Activated B cell treated with CpG ODN at 0.5 μM for 24 hours (primary cell): ENCODE measurements at regions of chr6 and their contacts with region 1.

Region 1: DNA sequence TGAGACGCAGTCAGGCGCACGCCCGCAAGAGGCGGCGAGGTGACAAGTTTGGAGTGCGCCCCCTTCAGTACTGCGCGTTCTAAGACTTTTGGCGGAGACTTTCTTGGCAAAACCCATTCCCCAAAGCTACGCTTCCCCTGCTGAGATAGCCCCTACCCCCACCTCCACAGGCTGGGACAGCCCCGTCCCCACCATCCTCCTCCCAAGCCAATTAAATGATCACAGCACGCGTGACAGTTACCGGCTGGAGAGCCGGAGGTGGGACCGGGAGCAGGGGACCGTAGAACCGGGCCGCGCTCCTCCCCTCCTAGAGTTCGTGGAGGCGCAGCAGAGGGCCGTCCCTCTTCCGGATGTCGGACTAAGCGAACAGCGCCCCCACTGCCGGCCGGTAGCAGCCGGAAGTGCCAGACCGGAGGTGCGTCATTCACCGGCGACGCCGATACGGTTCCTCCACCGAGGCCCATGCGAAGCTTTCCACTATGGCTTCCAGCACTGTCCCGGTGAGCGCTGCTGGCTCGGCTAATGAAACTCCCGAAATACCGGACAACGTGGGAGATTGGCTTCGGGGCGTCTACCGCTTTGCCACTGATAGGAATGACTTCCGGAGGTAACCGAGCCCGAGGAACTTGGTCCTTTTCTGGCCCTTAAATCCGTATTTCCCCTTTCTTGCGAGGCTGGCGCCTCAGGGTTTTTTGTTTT is at the start of gene TOMM6:
- DNase-seq: peak; percentile 91
- ATAC-seq: peak; percentile 83
- H3K4me3 Mint-ChIP-seq: peak within 1 kb of the TSS; percentile 97
- H3K27ac Mint-ChIP-seq: peak within 1 kb of the TSS; percentile 97
- H3K4me1 Mint-ChIP-seq: peaks cover 28% of the 10 kb centered on the region
- H3K27me3 Mint-ChIP-seq: no peaks in the 10 kb centered on the region
- CTCF ChIP-seq: peak; percentile 66
- total RNA-seq, gene TOMM6: 219 and 252 TPM in 2 replicates

Region 2: GRCh38 chr6:41200296-41200900 is 587.0 kb before region 1 on chr6:
- CTCF ChIA-PET with region 1: no interaction called
- POLR2A ChIA-PET with region 1: interaction called, 14 read pairs
- intact Hi-C with region 1: no loop called
- DNase-seq: no peak
- ATAC-seq: peak; percentile 29
- H3K4me3 Mint-ChIP-seq: peak overlapping the region; percentile 75
- H3K27ac Mint-ChIP-seq: peak overlapping the region; percentile 96
- H3K4me1 Mint-ChIP-seq: peaks cover 86% of the 10 kb centered on the region
- H3K27me3 Mint-ChIP-seq: no peaks in the 10 kb centered on the region
- CTCF ChIP-seq: no peak

Region 3: DNA sequence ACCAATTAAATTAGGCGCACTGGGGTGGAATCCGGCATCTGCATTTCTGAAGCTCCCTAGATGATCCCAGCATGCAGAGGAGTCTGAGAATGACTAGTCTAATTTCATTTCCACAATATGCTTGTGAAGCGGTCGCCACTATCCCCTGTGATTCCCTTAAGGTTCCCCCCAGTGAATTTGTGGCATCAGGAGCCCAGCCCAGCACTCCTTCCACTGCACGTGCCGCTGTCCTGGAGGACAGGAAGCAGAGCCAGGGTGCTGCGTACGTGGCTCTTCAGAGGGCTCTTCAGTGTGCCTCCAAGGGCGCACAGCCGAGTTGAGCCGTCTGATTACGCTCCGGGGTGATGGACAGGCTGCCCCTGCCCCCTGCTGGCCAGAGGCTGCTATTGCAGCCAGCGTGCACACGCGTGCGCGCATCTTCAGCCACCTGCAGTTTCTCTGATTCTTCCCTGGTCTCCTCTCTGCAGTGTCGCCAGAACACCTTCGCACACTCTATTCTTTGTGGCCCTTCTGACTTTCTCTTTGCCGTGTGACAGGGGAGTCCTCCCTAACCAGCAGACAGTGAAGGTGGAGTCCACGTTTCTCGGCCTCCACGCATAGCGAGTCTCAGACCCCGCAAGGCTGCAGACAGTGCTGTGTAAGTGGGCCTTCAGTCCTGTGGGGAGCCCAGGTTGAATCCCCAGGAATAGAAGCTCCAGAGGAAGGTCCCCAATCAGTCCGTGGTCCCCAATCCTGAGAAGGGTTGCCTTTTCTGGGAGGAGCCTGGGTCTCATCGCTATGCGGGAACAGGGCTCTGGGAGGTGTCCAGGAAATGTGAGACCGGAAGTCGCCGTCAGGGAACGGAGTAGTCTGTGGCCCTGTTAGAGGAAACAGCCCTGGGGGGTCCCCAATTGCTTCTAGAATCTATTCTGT is 468.5 kb before region 1 on chr6:
- CTCF ChIA-PET with region 1: no interaction called
- POLR2A ChIA-PET with region 1: no interaction called
- intact Hi-C with region 1: no loop called
- DNase-seq: peak; percentile 81
- ATAC-seq: peak; percentile 99
- H3K4me3 Mint-ChIP-seq: peak overlapping the region; percentile 80
- H3K27ac Mint-ChIP-seq: peak overlapping the region; percentile 76
- H3K4me1 Mint-ChIP-seq: peaks cover 47% of the 10 kb centered on the region
- H3K27me3 Mint-ChIP-seq: no peaks in the 10 kb centered on the region
- CTCF ChIP-seq: peak; percentile 90

Region 4: DNA sequence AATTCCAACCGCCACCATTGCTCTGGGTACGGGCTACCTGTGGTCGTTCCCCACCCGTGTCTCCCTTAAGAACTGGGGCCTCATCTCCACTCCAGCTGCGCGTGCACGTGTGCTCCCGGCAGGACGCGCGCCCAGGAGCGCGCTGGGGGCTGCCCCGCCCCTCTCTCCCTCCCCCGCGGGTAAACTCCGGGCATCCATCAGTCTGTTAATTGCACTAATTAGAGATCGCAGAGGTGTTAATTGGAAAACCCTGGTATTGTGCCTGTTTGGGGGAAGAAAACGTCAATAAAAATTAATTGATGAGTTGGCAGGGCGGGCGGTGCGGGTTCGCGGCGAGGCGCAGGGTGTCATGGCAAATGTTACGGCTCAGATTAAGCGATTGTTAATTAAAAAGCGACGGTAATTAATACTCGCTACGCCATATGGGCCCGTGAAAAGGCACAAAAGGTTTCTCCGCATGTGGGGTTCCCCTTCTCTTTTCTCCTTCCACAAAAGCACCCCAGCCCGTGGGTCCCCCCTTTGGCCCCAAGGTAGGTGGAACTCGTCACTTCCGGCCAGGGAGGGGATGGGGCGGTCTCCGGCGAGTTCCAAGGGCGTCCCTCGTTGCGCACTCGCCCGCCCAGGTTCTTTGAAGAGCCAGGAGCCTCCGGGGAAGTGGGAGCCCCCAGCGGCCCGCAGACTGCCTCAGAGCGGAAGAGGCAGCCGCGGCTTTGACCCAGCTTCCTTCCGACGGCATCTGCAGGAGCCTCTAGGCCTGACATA is 226.8 kb before region 1 on chr6:
- CTCF ChIA-PET with region 1: no interaction called
- POLR2A ChIA-PET with region 1: no interaction called
- intact Hi-C with region 1: loop called (anchors 1 kb)
- DNase-seq: peak; percentile 55
- ATAC-seq: peak; percentile 85
- H3K4me3 Mint-ChIP-seq: peak overlapping the region; percentile 89
- H3K27ac Mint-ChIP-seq: peak overlapping the region; percentile 75
- H3K4me1 Mint-ChIP-seq: peaks cover 35% of the 10 kb centered on the region
- H3K27me3 Mint-ChIP-seq: no peaks in the 10 kb centered on the region
- CTCF ChIP-seq: no peak

Region 5: GRCh38 chr6:41920921-41921711 is 133.7 kb after region 1 on chr6 and contains the starts of genes BYSL and MED20:
- CTCF ChIA-PET with region 1: interaction called, 18 read pairs
- POLR2A ChIA-PET with region 1: interaction called, 48 read pairs
- intact Hi-C with region 1: loop called (anchors 1 kb)
- DNase-seq: peak; percentile 95
- ATAC-seq: peak; percentile 91
- H3K4me3 Mint-ChIP-seq: peak within 1 kb of the TSS; percentile 98
- H3K27ac Mint-ChIP-seq: peak within 1 kb of the TSS; percentile 98
- H3K4me1 Mint-ChIP-seq: peaks cover 49% of the 10 kb centered on the region
- H3K27me3 Mint-ChIP-seq: no peaks in the 10 kb centered on the region
- CTCF ChIP-seq: peak; percentile 24
- total RNA-seq, gene BYSL: 39.5 and 43.2 TPM in 2 replicates
- total RNA-seq, gene MED20: 21.1 and 22.2 TPM in 2 replicates

Region 6: DNA sequence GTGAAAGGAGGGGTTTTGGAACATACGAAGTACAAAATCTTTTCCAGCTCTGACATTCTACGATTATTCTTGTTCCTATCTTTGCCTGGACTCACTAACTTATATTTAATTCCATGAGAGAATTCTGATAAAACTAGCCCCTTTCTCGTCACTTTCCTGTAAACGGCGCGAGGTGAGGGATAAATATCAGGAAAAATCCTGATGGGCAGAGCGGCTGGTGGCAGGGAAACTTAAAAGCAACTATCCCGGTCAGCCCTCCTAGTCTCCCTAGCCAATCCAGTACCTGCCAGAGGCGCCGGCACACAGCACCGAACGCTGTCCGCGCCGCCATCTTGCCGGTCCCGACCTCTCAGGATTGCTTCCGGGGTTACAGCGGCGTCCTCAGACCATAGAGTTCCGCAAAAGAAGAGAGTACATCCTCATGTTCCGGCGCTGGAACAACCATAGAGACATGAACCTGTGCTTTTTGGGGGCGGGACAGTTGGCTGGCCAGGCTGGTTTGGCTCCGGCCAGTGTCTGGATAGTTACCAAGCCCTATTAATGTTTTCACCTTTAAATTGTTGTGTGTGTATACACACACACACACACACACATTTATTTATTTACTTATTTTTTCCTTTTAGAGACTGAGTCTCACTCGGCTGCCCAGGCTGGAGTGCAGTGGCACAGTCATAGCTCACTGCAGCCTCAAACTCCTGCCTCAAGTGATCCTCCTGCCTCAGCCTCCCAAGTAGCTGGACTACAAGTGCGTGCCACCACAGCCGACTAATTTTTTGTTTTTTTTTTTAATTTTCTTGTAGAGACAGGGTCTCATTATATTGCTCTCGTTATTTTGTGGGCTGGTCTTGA is 430.4 kb after region 1 on chr6 and contains the start of gene MRPS10:
- CTCF ChIA-PET with region 1: interaction called, 7 read pairs
- POLR2A ChIA-PET with region 1: interaction called, 4 read pairs
- intact Hi-C with region 1: loop called (anchors 2 kb)
- DNase-seq: peak; percentile 76
- ATAC-seq: peak; percentile 99
- H3K4me3 Mint-ChIP-seq: peak within 1 kb of the TSS; percentile 99
- H3K27ac Mint-ChIP-seq: peak within 1 kb of the TSS; percentile 95
- H3K4me1 Mint-ChIP-seq: peaks cover 30% of the 10 kb centered on the region
- H3K27me3 Mint-ChIP-seq: no peaks in the 10 kb centered on the region
- CTCF ChIP-seq: no peak
- total RNA-seq, gene MRPS10: 35.7 and 37.0 TPM in 2 replicates